Activated naive CD4-positive, alpha-beta T cell treated with anti-CD3 and anti-CD28 coated beads for 36 hours (primary cell): ENCODE measurements at regions of chr5 and their contacts with region 1.

Region 1: DNA sequence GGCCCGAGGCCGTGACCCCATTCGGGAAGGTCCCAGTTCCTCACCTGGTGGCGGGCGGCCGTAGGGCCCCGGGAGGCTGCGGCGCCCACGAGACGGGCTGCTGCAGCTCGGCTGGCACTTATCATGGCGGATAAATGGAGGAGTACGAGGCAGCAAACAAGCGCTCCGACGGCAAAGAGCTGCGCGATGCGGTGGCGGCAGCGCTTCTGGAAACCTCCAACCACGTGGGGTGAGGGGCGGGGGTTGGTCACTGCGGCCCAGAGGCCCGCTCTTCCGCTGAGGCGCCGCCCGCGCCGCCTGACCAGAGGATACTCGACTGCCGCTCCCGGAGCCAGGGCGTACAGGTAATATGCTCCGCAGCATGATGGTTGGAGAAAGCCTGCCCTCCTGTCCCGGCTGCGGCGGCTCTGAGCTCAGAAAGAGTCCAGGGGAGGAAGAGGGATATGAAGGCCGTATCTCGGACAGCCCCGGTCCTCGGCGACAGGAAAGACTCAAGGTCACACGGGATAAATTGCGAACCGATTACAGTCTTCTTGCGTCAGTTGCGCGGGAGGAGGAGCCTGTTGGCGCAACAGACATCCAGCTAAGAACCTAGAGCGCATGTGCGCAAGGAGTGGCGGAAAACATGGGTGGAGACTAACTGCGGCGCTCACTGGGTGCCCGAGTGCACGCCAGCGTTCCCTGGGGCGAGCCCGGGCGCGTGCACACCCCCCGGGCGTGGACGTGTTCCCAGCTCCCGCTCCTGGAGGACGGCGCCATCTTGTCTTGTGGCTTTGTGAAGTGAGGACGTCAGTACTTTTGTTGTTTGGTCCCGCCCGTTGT is at the start of gene HSPA9:
- DNase-seq: peak; percentile 99
- H3K4me3 Mint-ChIP-seq: peak within 1 kb of the TSS; percentile 98
- H3K27ac Mint-ChIP-seq: peak within 1 kb of the TSS; percentile 99
- H3K4me1 Mint-ChIP-seq: peaks cover 39% of the 10 kb centered on the region
- H3K27me3 Mint-ChIP-seq: no peaks in the 10 kb centered on the region
- total RNA-seq, gene HSPA9: 457 to 472 TPM

Region 2: GRCh38 chr5:138331449-138332368 is 243.7 kb before region 1 on chr5 and contains the start of gene CDC25C:
- CTCF ChIA-PET with region 1: no interaction called
- intact Hi-C with region 1: loop called (anchors 1 kb)
- DNase-seq: peak; percentile 99
- H3K4me3 Mint-ChIP-seq: peak within 1 kb of the TSS; percentile 81
- H3K27ac Mint-ChIP-seq: peak within 1 kb of the TSS; percentile 83
- H3K4me1 Mint-ChIP-seq: peaks cover 9% of the 10 kb centered on the region
- H3K27me3 Mint-ChIP-seq: no peaks in the 10 kb centered on the region
- total RNA-seq, gene CDC25C: 23.2 to 26.6 TPM

Region 3: GRCh38 chr5:138542956-138543729 is 32.3 kb before region 1 on chr5 and contains the start of gene ETF1:
- CTCF ChIA-PET with region 1: interaction called, 3 read pairs
- intact Hi-C with region 1: loop called (anchors 1 kb)
- DNase-seq: peak; percentile 100
- H3K4me3 Mint-ChIP-seq: peak within 1 kb of the TSS; percentile 100
- H3K27ac Mint-ChIP-seq: peak within 1 kb of the TSS; percentile 100
- H3K4me1 Mint-ChIP-seq: peaks cover 71% of the 10 kb centered on the region
- H3K27me3 Mint-ChIP-seq: no peaks in the 10 kb centered on the region
- total RNA-seq, gene ETF1: 99.8 to 107 TPM

Region 4: DNA sequence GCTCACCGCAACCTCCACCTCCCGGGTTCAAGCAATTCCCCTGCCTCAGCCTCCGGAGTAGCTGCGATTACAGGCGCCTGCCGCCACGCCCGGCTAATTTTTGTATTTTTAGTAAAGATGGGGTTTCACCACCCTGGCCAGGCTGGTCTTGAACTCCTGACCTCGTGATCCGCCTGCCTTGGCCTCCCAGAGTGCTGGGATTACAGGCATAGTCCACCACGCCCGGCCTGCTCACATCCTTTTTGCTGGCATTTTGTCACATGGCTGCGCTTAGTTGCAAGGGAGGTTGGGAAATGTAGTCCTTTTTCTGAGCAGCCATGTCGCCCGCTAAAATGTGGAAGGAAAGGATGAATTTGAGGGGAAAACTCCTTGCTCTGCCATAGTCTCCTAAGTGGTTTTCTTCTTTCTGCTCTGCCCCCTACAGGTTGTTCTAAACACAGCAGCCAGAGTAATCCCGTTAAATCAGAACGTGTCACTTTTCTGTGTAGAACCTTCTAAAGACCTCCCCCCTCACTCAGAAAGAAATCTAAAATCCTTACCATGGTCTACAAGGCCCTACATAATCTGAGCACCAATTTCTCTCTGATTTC is 57.6 kb after region 1 on chr5:
- CTCF ChIA-PET with region 1: interaction called, 7 read pairs
- intact Hi-C with region 1: loop called (anchors 1 kb)
- DNase-seq: peak; percentile 50
- H3K4me3 Mint-ChIP-seq: no peak overlapping the region
- H3K27ac Mint-ChIP-seq: no peak overlapping the region
- H3K4me1 Mint-ChIP-seq: no peaks in the 10 kb centered on the region
- H3K27me3 Mint-ChIP-seq: peaks cover 51% of the 10 kb centered on the region

Region 5: GRCh38 chr5:139197710-139198669 is 622.6 kb after region 1 on chr5 and contains the start of gene SIL1:
- CTCF ChIA-PET with region 1: no interaction called
- intact Hi-C with region 1: loop called (anchors 2 kb)
- DNase-seq: peak; percentile 97
- H3K4me3 Mint-ChIP-seq: peak within 1 kb of the TSS; percentile 89
- H3K27ac Mint-ChIP-seq: peak within 1 kb of the TSS; percentile 82
- H3K4me1 Mint-ChIP-seq: peaks cover 27% of the 10 kb centered on the region
- H3K27me3 Mint-ChIP-seq: no peaks in the 10 kb centered on the region
- total RNA-seq, gene SIL1: 21.4 to 29.6 TPM

Region 6: DNA sequence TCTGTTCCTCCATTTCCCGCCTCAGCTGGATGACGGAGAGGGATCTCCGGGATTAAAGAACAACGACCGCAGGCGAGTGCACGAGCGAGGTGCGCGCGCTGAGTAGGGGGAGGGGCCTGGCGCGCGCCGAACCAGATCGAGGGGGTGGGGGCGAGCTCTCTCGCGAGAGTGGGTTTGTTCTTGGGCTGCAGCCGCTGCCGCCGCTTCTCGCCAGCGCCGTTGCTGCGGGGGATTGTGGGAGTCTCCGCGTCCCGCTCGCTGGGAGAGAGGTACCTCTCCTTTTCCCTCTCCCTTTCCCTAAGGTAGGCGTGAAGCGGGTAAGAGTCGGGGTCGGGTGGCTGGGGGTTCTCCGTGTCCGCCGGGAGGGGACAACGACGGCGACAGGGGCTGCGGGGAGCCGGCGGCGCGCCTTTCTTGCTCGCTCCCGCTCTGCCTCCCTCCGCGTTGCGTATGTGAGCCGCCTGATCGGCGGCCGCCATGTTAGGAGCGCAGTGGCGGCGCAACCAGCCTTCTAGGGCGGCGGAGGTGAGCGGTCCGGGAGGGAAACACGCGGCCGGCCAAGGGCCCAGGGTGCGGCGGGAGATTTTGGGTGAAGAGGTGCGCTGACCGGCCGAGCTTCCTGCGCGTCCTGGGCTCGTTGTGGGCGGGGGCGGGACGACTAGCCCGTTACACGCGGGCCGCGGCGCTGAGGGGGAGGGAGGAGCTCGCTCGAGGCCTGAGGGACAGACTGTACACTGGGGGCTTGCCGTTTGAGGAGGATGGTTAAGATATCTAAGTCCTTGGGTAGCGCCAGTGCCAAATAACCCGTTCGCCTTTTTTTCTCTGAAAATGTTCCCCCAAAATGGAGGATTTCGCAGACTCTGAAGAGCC is 718.3 kb after region 1 on chr5 and contains the start of gene MATR3:
- CTCF ChIA-PET with region 1: interaction called, 3 read pairs
- intact Hi-C with region 1: loop called (anchors 1 kb)
- DNase-seq: peak; percentile 96
- H3K4me3 Mint-ChIP-seq: peak within 1 kb of the TSS; percentile 89
- H3K27ac Mint-ChIP-seq: peak within 1 kb of the TSS; percentile 97
- H3K4me1 Mint-ChIP-seq: peaks cover 37% of the 10 kb centered on the region
- H3K27me3 Mint-ChIP-seq: no peaks in the 10 kb centered on the region
- total RNA-seq, gene MATR3: 137 to 164 TPM